Heart left ventricle (tissue), 16 donors: ENCODE measurements at regions of chr10 and their contacts with region 1.

Region 1: DNA sequence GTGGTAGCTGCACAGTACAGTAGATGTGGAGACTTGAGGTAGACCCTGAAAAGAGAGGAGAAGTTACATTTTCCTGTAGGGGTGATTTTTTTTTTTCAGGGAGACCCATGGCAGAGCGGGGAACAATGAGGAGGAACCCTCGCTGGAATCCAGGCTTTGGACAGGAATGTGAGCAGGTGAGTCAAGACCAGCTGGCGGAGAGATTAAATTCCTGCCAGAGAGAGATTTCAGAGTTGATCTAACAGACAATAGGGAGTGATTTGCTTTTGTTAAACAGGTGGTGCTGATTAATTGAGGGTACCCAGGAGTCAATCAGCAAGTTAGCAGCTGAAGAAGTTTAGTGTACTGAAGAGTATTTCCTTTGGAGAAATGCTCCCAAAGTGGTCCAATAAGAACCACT is 41.6 kb upstream of the MINDY3 start:
- DNase-seq: no peak
- ATAC-seq: no peak
- H3K4me3 ChIP-seq: no peak overlapping the region
- H3K27ac ChIP-seq: no peak overlapping the region
- H3K4me1 ChIP-seq: no peaks in the 10 kb centered on the region
- H3K27me3 ChIP-seq: peaks cover 0 to 25% (median 0%) of the 10 kb centered on the region in 9 donors
- CTCF ChIP-seq: no peak
- POLR2A ChIP-seq: no peak

Region 2: GRCh38 chr10:16545116-16545736 is 643.3 kb after region 1 on chr10:
- intact Hi-C with region 1: loop called in 6 of 10 experiments (anchors 5 to 10 kb)
- DNase-seq: no peak
- ATAC-seq: peak in 1 of 4 donors; percentile 61
- H3K4me3 ChIP-seq: no peak overlapping the region
- H3K27ac ChIP-seq: no peak overlapping the region
- H3K4me1 ChIP-seq: peaks cover 0 to 5% (median 0%) of the 10 kb centered on the region in 12 donors
- H3K27me3 ChIP-seq: peaks cover 0 to 12% (median 0%) of the 10 kb centered on the region in 9 donors
- CTCF ChIP-seq: peak; percentile 35 to 63 (median 50)
- POLR2A ChIP-seq: no peak

Region 3: DNA sequence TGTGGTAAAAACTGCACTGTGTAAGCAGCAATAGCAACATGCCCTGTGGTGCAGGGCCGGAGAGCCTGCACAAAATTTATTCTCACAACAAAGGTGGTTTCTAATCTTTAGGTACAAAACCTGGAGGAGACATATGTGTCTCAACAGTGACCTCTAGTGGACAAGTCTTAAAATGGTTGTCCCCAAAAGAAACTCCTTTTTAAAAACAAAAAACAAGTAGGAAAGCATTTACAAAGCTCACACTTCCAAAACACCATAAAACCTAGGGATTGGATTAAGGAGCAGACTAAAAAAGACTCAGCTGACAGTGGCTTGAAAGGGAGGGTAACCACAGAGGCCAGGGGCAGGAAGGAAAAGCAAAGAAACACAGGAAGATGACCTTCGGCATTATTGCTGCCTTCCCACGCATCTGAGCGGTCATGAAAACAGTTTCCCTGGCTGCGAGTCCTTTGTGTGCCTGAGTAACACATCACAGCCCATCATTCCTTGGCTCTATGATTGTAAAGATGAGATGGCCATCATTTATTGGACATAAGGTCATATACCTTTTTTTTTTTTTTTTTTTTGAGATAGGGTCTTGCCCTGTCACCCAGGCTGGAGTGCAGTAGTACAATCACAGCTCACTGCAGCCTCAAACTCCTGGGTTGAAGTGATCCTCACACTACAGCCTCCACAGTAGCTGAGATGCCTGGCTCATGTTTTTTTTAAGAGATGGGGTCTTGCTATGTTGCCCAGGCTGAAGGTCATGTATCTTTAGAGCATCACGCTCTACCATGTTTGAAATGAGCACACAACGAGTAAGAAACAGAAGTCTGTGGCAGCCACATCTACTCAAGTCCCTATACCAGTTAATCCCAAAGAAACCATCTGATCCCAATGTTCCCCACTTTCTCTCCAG is 875.8 kb after region 1 on chr10:
- intact Hi-C with region 1: loop called in 6 of 10 experiments (anchors 1 to 10 kb)
- DNase-seq: peak in 3 of 5 donors; percentile 46 to 61 (median 53)
- ATAC-seq: peak; percentile 69 to 96 (median 79)
- H3K4me3 ChIP-seq: peak overlapping the region in 1 of 12 donors; percentile 12
- H3K27ac ChIP-seq: peak overlapping the region in 10 of 12 donors; percentile 5 to 57 (median 34)
- H3K4me1 ChIP-seq: peaks cover 0 to 31% (median 11%) of the 10 kb centered on the region in 12 donors
- H3K27me3 ChIP-seq: no peaks in the 10 kb centered on the region
- CTCF ChIP-seq: peak; percentile 70 to 85 (median 81)
- POLR2A ChIP-seq: no peak

Region 4: GRCh38 chr10:16809074-16809718 is 907.3 kb after region 1 on chr10:
- intact Hi-C with region 1: loop called in 6 of 10 experiments (anchors 2 to 10 kb)
- DNase-seq: peak in 4 of 5 donors; percentile 37 to 52 (median 45)
- ATAC-seq: peak; percentile 66 to 74 (median 72)
- H3K4me3 ChIP-seq: no peak overlapping the region
- H3K27ac ChIP-seq: no peak overlapping the region
- H3K4me1 ChIP-seq: peaks cover 0 to 31% (median 6%) of the 10 kb centered on the region in 12 donors
- H3K27me3 ChIP-seq: no peaks in the 10 kb centered on the region
- CTCF ChIP-seq: peak; percentile 49 to 75 (median 62)
- POLR2A ChIP-seq: no peak